ENCODE measurements at regions of chr16 and their contacts with region 1.

Region 1: DNA sequence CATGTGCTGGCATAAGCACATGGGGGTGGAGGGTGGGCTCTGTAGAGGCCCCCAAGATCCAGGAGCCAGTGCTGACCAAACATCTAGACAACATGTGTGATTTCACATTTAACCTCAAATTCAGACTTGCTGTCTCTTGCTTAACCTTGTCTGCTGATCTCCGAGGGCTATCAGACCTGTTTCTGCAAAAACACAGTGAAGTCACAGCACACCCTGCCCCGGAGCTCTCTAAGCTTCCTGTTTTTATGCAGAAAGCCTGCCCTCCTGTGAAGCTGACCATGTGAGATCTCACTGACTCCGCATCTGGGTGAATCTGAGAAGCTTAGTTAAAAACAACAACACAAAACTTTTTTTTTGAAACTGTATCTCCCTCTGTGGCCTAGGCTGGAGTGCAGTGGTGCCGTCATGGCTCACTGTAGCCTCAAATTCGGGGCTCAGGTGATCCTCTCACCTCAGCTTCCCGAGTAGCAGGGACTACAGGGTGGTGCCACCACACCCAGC is 6.6 kb upstream of the DPEP2 start:
- DNase-seq: peak; percentile 35 to 82 (median 61)
- ATAC-seq: peak; percentile 96
- H3K4me3 ChIP-seq: no peak overlapping the region
- H3K4me3 Mint-ChIP-seq: peak overlapping the region; percentile 74
- H3K27ac ChIP-seq: peak overlapping the region; percentile 62 to 84
- H3K27ac Mint-ChIP-seq: peak overlapping the region; percentile 97
- H3K4me1 ChIP-seq: peaks cover 49% of the 10 kb centered on the region
- H3K4me1 Mint-ChIP-seq: peaks cover 48% of the 10 kb centered on the region
- H3K27me3 ChIP-seq: no peaks in the 10 kb centered on the region
- H3K27me3 Mint-ChIP-seq: no peaks in the 10 kb centered on the region
- CTCF ChIP-seq: no peak

Region 2: GRCh38 chr16:67979955-67980678 is 25.7 kb before region 1 on chr16 and contains the start of gene DPEP3:
- CTCF ChIA-PET with region 1: no interaction called
- POLR2A ChIA-PET with region 1: interaction called, 27 read pairs
- intact Hi-C with region 1: no loop called
- DNase-seq: peak in 2 of 14 experiments; percentile 31 to 49
- ATAC-seq: no peak
- H3K4me3 ChIP-seq: no peak within 1 kb of the TSS
- H3K4me3 Mint-ChIP-seq: no peak within 1 kb of the TSS
- H3K27ac ChIP-seq: no peak within 1 kb of the TSS
- H3K27ac Mint-ChIP-seq: no peak within 1 kb of the TSS
- H3K4me1 ChIP-seq: peaks cover 23% of the 10 kb centered on the region
- H3K4me1 Mint-ChIP-seq: peaks cover 23% of the 10 kb centered on the region
- H3K27me3 ChIP-seq: no peaks in the 10 kb centered on the region
- H3K27me3 Mint-ChIP-seq: no peaks in the 10 kb centered on the region
- CTCF ChIP-seq: no peak
- total RNA-seq, gene DPEP3: 0.53 to 0.63 TPM

Region 3: DNA sequence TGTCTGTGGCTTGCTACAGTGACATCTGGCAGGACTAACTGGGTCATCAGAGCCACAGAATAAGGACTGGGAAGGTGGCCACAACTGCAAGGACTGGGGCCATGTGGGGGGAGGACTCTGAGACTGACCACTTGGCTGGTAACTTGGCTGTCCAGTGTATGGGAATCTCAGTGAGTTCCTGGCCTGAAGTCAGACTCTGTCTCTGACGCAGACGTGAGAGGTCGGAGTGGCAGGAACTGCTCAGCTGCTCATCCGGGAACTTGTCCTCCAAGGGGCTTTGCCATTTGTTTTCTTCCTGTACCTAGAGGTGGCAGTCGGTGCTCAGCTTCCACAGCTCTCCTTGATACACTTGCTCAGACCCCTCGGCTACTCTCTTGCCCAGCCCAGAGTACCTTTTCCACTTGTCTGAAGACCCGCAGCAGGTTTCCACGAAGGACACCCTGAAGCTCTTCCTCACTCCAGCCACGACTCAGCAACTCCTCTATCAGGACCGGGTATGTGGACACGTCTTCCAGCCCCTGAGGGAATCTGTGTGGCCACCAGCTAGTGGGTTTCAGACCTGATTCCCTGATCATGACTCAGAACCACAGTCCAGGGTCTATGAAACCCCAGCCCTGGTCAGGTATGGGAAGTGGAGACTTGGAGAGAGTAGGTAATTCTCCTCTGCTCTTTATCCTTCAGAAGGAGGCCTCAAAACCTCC is 18.2 kb before region 1 on chr16:
- CTCF ChIA-PET with region 1: no interaction called
- POLR2A ChIA-PET with region 1: interaction called, 27 read pairs
- intact Hi-C with region 1: no loop called
- DNase-seq: no peak
- ATAC-seq: no peak
- H3K4me3 ChIP-seq: no peak overlapping the region
- H3K4me3 Mint-ChIP-seq: no peak overlapping the region
- H3K27ac ChIP-seq: peak overlapping the region in 1 of 2 donors; percentile 32
- H3K27ac Mint-ChIP-seq: peak overlapping the region; percentile 79
- H3K4me1 ChIP-seq: peaks cover 29% of the 10 kb centered on the region
- H3K4me1 Mint-ChIP-seq: peaks cover 32% of the 10 kb centered on the region
- H3K27me3 ChIP-seq: no peaks in the 10 kb centered on the region
- H3K27me3 Mint-ChIP-seq: no peaks in the 10 kb centered on the region
- CTCF ChIP-seq: no peak

Region 4: GRCh38 chr16:67993189-67994039 is 12.4 kb before region 1 on chr16:
- CTCF ChIA-PET with region 1: no interaction called
- POLR2A ChIA-PET with region 1: interaction called, 23 read pairs
- intact Hi-C with region 1: no loop called
- DNase-seq: peak; percentile 69 to 93 (median 78)
- ATAC-seq: peak; percentile 91
- H3K4me3 ChIP-seq: peak overlapping the region; percentile 63
- H3K4me3 Mint-ChIP-seq: peak overlapping the region; percentile 89
- H3K27ac ChIP-seq: peak overlapping the region; percentile 76 to 90
- H3K27ac Mint-ChIP-seq: peak overlapping the region; percentile 93
- H3K4me1 ChIP-seq: peaks cover 55% of the 10 kb centered on the region
- H3K4me1 Mint-ChIP-seq: peaks cover 36% of the 10 kb centered on the region
- H3K27me3 ChIP-seq: no peaks in the 10 kb centered on the region
- H3K27me3 Mint-ChIP-seq: no peaks in the 10 kb centered on the region
- CTCF ChIP-seq: peak; percentile 92

Region 5: DNA sequence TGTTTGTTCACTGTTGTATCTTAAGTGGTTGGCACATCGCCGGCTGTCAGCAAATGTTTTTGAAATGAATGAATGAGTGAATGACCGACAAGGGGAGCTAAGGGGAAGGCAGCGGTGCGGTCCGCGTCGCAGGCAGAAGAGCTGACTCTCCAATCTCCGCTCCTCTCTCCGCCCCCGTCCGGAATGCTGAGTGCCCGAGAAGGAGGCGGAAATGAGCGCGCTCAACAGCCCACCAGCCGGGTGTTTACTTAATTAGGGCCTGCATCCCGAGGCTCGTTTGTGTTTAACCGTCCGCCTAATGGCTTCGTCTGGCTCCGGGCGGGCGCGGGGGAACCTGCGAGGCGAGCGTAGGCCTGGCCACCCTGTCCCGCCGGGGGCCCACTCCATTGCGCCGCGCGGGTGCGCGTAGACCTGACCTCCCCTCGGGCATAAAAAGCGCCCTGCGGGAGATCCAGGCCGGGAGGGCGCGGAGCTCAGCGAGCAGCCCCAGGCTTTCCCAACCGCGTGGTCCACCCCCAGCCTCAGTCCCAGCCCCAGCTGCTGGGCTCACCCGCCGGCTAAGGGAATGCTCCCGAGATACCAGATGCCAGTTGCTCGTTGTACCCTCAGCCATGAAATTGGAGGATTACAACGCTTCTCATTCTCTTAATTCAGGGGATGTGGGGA is 636.7 kb after region 1 on chr16:
- CTCF ChIA-PET with region 1: no interaction called
- POLR2A ChIA-PET with region 1: no interaction called
- intact Hi-C with region 1: no loop called
- DNase-seq: no peak
- ATAC-seq: no peak
- H3K4me3 ChIP-seq: no peak overlapping the region
- H3K4me3 Mint-ChIP-seq: no peak overlapping the region
- H3K27ac ChIP-seq: no peak overlapping the region
- H3K27ac Mint-ChIP-seq: no peak overlapping the region
- H3K4me1 ChIP-seq: peaks cover 27% of the 10 kb centered on the region
- H3K4me1 Mint-ChIP-seq: peaks cover 20% of the 10 kb centered on the region
- H3K27me3 ChIP-seq: peaks cover 53 to 56% of the 10 kb centered on the region in 2 experiments
- H3K27me3 Mint-ChIP-seq: peaks cover 62% of the 10 kb centered on the region
- CTCF ChIP-seq: no peak